Activated B cell treated with CpG ODN at 0.5 μM for 24 hours (primary cell): ENCODE measurements at regions of chr17 and their contacts with region 1.

Region 1: DNA sequence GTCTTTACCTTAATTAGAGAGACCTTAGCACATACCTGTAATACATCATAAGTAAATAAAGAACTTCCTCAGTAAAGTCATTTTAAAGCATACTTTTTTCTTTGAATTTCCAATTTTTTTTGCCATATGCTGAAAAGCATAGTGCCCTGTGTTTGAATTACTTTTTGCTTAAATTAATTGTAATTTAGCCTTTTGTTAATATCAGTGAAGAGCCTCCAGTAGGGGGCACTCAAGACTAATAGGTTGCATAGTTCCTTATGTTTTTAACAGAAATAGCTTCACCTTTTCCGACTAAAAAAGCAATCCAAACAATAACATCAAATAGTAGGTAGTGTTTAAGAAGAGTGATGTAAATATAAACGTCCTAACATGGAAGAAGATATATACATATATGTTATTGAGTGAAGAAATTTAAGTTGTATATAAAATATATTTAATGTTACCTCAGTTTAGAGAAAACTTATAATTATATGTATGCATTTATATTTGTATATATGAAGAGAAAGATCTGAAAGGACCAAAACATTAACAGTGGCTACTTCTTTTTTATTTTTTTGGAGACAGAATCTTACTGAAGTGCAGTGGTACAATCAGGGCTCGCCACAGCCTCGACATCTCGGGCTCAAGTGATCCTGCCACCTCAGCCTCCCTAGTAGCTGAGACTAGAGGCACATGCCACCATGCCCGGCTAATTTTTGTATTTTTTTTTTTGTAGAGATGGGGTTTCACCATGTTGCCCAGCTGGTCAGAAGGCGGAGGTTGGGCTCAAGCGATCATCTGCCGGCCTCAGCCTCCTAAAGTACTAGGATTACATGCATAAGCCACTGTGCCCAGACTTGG is 18.8 kb downstream of the RAD51C start:
- DNase-seq: no peak
- ATAC-seq: peak; percentile 40
- H3K4me3 Mint-ChIP-seq: no peak overlapping the region
- H3K27ac Mint-ChIP-seq: no peak overlapping the region
- H3K4me1 Mint-ChIP-seq: peaks cover 12% of the 10 kb centered on the region
- H3K27me3 Mint-ChIP-seq: no peaks in the 10 kb centered on the region
- CTCF ChIP-seq: no peak

Region 2: GRCh38 chr17:58382108-58382871 is 328.9 kb before region 1 on chr17:
- CTCF ChIA-PET with region 1: no interaction called
- POLR2A ChIA-PET with region 1: no interaction called
- intact Hi-C with region 1: no loop called
- DNase-seq: no peak
- ATAC-seq: peak; percentile 45
- H3K4me3 Mint-ChIP-seq: peak overlapping the region; percentile 36
- H3K27ac Mint-ChIP-seq: peak overlapping the region; percentile 60
- H3K4me1 Mint-ChIP-seq: peaks cover 24% of the 10 kb centered on the region
- H3K27me3 Mint-ChIP-seq: no peaks in the 10 kb centered on the region
- CTCF ChIP-seq: no peak

Region 3: GRCh38 chr17:58587702-58588254 is 123.4 kb before region 1 on chr17:
- CTCF ChIA-PET with region 1: interaction called, 5 read pairs
- POLR2A ChIA-PET with region 1: interaction called, 3 read pairs
- intact Hi-C with region 1: loop called (anchors 1 kb)
- DNase-seq: peak; percentile 21
- ATAC-seq: peak; percentile 86
- H3K4me3 Mint-ChIP-seq: no peak overlapping the region
- H3K27ac Mint-ChIP-seq: no peak overlapping the region
- H3K4me1 Mint-ChIP-seq: peaks cover 3% of the 10 kb centered on the region
- H3K27me3 Mint-ChIP-seq: no peaks in the 10 kb centered on the region
- CTCF ChIP-seq: no peak

Region 4: DNA sequence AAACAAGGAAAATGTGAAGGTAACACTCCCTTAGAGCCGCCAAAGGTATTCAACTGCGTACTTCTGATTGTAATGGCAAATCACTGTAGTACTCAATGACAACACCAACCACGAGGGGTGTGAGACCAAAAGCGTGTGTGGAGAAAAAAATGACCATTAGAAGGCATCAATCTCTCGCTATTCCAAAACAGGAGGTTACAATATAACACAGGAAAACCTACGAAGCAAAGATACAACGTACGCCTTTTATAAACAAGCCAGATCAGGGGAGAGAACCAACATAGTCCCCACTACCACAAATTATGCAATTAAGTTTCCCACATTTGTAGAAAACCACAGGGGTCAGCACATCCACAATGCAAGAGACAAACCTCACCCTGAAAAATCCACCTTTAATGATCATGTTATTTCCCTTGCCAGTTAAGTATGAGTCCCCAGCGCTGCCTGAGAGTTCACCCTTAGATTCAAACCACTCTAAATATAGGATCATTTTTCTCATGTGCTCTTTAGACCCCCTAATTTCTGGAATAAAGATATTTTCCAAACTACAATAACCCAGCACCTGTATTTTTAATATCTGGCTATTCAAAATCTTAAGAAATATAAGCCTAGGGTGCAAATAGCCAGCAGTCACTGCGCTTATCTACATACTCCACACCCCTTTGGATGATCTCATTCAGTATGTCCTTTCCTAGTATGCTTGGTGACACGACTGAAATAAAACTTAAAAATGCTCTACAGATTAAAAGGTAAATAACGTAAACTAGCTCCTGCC is 31.7 kb before region 1 on chr17:
- CTCF ChIA-PET with region 1: no interaction called
- POLR2A ChIA-PET with region 1: no interaction called
- intact Hi-C with region 1: no loop called
- DNase-seq: no peak
- ATAC-seq: no peak
- H3K4me3 Mint-ChIP-seq: no peak overlapping the region
- H3K27ac Mint-ChIP-seq: no peak overlapping the region
- H3K4me1 Mint-ChIP-seq: no peaks in the 10 kb centered on the region
- H3K27me3 Mint-ChIP-seq: peaks cover 7% of the 10 kb centered on the region
- CTCF ChIP-seq: no peak

Region 5: DNA sequence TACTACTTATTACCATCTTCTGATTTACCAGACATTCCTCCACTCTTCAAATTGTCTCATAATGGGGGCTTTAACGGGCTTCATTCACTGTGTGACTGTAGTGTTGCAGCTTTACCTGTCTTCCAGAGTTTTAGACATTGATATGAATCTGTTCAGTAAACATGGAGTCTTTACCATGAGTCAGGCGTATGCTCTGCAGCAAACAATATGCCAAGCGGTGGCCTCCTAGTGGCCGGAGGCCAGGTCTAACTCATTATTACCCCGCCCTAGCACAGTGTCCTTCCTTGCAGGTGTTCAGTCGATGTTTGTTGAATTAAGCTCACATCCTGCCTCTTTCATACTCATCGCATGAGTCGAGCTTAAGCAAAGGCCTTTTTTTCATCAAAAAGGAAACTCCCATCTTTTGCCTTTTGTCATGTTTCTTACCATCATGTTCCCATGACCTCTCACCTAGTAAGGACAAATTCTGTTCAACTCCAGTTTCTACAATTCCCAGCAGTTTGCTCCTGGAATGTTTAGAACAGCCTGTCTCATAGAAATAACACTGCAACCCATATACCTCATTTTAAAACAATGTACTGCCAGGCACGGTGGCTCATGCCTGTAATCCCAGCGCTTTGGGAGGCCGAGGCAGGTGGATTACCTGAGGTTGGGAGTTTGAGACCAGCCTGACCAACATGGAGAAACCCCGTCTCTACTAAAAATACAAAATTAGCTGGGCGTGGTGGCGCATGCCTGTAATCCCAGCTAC is 1142.2 kb after region 1 on chr17:
- CTCF ChIA-PET with region 1: no interaction called
- POLR2A ChIA-PET with region 1: no interaction called
- intact Hi-C with region 1: no loop called
- DNase-seq: no peak
- ATAC-seq: peak; percentile 78
- H3K4me3 Mint-ChIP-seq: no peak overlapping the region
- H3K27ac Mint-ChIP-seq: peak overlapping the region; percentile 78
- H3K4me1 Mint-ChIP-seq: peaks cover 25% of the 10 kb centered on the region
- H3K27me3 Mint-ChIP-seq: no peaks in the 10 kb centered on the region
- CTCF ChIP-seq: no peak